ENCODE measurements at regions of chr9 and their contacts with region 1.

Region 1: GRCh38 chr9:124749781-124750180 is 21.3 kb downstream of the NR6A1 start:
- DNase-seq: no peak
- ATAC-seq: no peak

Region 2: DNA sequence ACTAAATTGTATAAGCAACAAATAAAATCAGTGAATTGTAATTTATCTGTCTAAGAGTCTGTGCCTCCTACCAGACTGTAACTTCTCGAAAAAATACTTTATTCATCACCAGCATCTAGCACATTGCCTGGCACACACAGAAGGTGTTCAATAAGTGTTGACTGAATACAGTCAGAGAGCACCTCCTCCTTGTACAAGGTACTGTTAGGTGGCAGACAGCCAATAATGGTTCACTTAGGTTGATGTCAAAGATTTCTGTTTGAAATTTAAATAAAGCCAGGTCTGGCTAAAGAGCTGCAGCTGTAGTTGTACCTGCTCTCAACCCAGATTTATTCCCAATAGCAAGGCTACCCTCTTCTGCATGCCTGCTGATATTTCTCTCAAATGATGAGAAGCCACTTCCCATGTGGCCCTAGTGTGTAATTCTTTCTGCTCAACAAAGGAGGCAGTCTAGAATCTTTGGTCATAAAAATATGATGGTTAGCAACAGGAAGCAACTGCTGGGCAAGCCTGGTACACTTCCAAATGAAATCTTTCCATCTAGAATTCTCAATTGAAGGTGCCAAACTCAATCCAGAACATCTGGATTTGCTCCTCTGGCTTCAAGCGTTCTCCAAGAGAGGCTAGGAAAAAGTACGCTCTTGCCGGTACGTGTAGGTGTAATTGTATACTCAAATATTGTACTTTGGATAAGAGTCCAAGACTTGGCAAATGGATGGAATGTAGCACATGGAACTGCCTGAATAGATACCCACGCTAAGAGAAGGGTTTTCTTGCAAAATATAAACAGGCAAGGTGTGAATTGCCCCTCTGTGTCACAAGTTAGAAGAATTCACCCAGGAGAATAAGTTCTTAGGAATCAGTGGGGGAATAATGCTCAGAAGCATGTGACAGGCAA is 74.3 kb before region 1 on chr9:
- intact Hi-C with region 1: no loop called
- DNase-seq: no peak
- ATAC-seq: no peak

Region 3: GRCh38 chr9:125361837-125362531 is 612.2 kb after region 1 on chr9:
- intact Hi-C with region 1: no loop called
- DNase-seq: no peak
- ATAC-seq: no peak

Region 4: GRCh38 chr9:125672876-125673275 is 923.1 kb after region 1 on chr9:
- intact Hi-C with region 1: no loop called
- DNase-seq: no peak
- ATAC-seq: no peak

Region 5: GRCh38 chr9:126049896-126050604 is 1300.3 kb after region 1 on chr9:
- intact Hi-C with region 1: loop called (anchors 5 kb)
- DNase-seq: no peak
- ATAC-seq: no peak